Naive thymus-derived CD4-positive, alpha-beta T cell (primary cell): ENCODE measurements at regions of chr21 and their contacts with region 1.

Region 1: DNA sequence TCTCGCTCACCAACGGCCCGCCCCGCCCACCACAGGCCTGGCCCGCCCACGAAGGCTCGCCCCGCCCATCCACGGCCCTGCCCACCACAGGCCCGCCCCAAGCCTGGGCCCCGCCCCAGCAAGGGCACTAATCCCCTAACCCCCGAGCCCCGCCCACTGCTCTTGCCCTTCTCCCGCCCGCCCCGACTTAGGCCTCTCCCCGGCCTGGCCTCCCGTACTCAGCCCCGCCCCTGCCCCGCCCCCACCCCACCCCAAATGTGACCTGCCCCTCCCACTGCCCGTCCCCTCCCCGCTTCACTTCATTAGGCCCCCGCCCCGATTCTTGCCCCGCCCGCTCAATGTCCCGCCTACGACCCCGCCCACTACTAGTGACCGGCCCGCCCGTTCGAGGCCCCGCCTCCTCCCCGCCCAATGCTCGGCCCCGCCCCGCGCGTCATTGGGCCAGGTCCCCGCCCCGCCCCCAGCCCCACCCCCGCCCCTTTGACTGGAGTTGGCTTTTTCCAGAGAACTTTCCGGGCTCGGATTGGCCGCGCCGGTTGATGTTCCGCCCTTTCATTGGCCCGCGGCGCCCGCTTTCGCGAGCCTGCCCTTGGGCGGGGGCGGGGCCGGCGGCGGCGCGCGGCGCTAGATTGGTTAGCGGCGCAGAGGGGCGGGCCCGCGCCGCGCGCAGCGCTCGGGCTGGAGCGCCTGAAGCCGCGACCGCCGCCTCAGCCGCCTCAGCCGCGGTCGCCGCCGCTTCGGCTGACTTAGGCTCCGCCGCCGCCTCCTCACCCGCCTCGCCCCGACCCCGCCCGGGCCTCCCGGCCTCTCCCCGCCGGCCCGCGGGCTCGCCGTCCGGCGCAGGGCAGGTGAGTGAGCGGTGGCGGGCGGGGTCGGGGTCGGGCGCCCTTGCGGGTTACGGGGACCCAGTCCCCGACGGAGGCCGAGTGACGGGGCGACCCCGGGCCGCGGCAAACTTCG is at the start of gene PCBP3:
- DNase-seq: peak; percentile 93 to 99 (median 96)
- ATAC-seq: peak; percentile 87
- H3K4me3 ChIP-seq: no peak within 1 kb of the TSS
- H3K4me3 Mint-ChIP-seq: peak within 1 kb of the TSS; percentile 74 to 86 (median 81)
- H3K27ac ChIP-seq: peak within 1 kb of the TSS; percentile 57
- H3K27ac Mint-ChIP-seq: peak within 1 kb of the TSS in 7 of 9 donors; percentile 28 to 84 (median 74)
- H3K4me1 ChIP-seq: peaks cover 6 to 38% of the 10 kb centered on the region in 2 donors
- H3K4me1 Mint-ChIP-seq: peaks cover 15 to 51% (median 41%) of the 10 kb centered on the region in 7 donors
- H3K27me3 ChIP-seq: peaks cover 0 to 16% of the 10 kb centered on the region in 2 donors
- H3K27me3 Mint-ChIP-seq: peaks cover 0 to 19% (median 6%) of the 10 kb centered on the region in 5 donors
- total RNA-seq, gene PCBP3: 1.2 to 5.2 (median 4.0) TPM

Region 2: DNA sequence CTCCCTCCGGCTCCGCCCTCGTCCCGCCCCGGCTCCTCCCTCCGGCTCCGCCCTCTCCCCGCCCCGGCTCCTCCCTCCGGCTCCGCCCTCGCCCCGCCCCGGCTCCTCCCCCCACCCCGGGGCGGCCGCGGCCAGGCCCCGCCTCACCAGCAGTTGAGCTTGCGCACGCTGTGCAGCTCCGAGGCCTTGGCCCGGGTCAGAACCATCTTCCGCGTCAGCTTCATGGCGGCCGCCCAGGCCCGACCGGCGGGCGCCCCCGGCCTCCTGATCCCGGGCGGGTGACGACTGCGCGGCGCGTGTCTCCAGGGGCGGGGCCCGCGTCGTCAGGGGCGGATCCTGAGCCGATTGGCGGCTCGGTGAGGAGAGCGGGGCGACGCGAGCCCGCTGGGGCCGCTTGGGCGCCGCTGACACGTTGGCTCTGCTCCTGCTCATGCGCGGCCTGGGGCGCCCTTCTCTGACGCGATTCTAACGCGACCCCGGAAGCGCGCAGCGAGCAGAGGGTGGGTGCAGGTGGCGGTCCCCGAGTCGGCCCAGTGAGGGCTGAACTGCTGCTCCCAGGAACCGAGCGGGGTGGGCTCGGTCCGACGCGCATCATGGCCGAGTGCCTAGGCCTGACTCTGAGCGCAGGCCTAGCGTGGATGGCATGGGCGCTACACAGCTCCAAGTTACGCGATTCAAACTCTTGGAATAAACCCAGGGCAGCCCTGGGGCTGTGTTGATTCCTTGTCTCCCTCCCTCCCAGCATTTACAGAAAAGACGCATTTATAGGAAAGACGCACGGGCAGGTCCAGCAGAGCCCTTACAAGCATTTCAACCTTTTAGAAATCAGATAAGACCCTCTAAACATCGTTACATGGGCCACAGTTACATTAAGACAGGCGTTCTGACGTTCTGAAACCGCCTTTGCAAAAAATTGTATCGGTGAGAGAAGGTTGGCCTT is 1304.1 kb before region 1 on chr21 and contains the start of gene CFAP410:
- CTCF ChIA-PET with region 1: no interaction called
- POLR2A ChIA-PET with region 1: no interaction called
- intact Hi-C with region 1: loop called in 1 of 2 experiments (anchors 5 kb)
- DNase-seq: peak; percentile 94 to 97 (median 97)
- ATAC-seq: peak; percentile 92
- H3K4me3 ChIP-seq: peak within 1 kb of the TSS; percentile 97
- H3K4me3 Mint-ChIP-seq: peak within 1 kb of the TSS; percentile 85 to 95 (median 92)
- H3K27ac ChIP-seq: peak within 1 kb of the TSS; percentile 96
- H3K27ac Mint-ChIP-seq: peak within 1 kb of the TSS; percentile 95 to 100 (median 97)
- H3K4me1 ChIP-seq: peaks cover 10 to 15% of the 10 kb centered on the region in 2 donors
- H3K4me1 Mint-ChIP-seq: peaks cover 4 to 33% (median 24%) of the 10 kb centered on the region in 7 donors
- H3K27me3 ChIP-seq: no peaks in the 10 kb centered on the region
- H3K27me3 Mint-ChIP-seq: no peaks in the 10 kb centered on the region
- total RNA-seq, gene CFAP410: 20.8 to 66.7 (median 49.5) TPM

Region 3: DNA sequence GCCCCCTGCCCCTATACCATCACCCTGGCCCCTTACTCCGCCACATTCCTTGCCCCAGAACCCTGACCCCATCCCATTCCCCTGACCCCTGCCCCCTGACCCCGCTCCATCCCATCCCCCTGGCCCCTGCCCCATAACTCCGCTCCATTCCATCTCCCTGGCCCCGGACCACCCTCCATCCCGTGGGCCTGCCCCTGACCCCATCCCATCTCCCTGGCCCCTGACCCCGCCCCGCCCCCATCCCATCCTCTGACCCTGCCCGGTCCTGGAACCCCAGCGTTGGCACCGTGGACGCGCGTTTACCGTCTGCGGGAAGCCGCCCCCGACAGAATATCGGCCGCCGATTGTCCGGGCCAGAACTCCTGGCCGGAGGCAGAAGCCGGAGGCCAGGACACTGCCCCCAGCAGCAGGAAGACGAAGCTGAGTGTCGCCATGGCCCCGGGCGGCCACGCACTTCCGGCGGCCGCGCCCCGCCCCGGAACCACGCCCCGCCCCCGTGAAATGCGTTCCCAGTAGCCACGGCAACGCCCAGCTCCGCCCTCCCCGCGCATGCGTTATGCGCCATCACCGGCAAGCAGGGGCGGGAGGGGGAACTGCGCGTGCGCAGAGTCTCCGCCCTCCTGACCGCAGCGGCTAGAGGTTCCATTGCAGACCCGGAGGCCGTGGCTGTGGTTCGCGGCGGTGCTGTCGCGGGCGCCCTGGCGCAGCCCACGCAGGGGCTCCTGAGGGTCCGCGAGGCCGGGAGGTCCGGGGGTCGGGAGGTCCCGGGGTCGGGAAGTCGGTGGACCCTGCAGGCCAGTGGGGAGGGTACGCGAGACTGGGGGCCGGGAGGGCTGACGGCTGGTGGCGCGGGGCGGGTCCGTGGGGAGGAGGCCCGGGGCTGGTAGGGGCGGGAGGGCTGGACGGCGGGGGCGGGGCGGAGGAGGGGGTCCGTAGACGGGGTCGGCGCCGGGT is 355.6 kb before region 1 on chr21 and contains the start of gene POFUT2:
- CTCF ChIA-PET with region 1: no interaction called
- POLR2A ChIA-PET with region 1: no interaction called
- intact Hi-C with region 1: loop called in 1 of 2 experiments (anchors 1 kb)
- DNase-seq: peak; percentile 95 to 100 (median 98)
- ATAC-seq: peak; percentile 91
- H3K4me3 ChIP-seq: peak within 1 kb of the TSS; percentile 68
- H3K4me3 Mint-ChIP-seq: peak within 1 kb of the TSS; percentile 68 to 88 (median 87)
- H3K27ac ChIP-seq: peak within 1 kb of the TSS; percentile 97
- H3K27ac Mint-ChIP-seq: peak within 1 kb of the TSS; percentile 72 to 93 (median 87)
- H3K4me1 ChIP-seq: peaks cover 7 to 16% of the 10 kb centered on the region in 2 donors
- H3K4me1 Mint-ChIP-seq: peaks cover 11 to 46% (median 30%) of the 10 kb centered on the region in 7 donors
- H3K27me3 ChIP-seq: no peaks in the 10 kb centered on the region
- H3K27me3 Mint-ChIP-seq: peaks cover 0 to 10% (median 0%) of the 10 kb centered on the region in 5 donors
- total RNA-seq, gene POFUT2: 20.1 to 53.3 (median 47.8) TPM

Region 4: DNA sequence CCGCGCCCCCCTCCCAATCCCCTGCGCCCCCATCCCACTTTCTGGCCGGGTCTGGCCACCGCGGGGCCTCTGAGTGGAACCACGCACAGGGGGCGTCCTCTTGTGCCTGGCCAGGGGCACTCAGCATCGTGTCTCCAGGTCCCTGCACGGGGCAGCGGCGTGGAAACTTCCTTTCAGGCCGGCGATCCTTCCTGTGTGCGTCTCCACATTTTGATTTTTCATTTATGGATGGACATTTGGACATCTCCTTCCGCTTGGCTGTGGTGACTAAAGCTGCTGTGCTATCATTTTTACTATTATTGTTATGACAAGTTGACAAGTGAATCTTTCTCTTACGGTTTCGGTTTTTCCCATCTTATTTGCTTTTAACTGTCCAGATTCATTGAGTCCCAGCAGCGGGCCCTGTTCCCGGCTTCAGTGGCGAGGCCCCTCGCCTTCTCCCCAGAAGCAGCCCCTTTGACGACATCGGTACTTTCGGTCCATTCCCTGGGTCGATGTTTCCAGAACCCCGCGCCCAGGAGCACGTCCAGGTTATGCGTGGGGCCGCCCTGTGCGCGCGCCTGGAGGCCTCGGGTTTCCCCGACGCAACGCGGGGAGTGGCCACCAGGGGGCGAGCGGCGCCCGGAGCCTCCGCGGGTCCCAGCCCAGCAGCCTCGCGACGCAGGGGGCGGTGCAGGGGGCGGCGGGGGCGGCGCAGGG is 88.7 kb before region 1 on chr21:
- CTCF ChIA-PET with region 1: no interaction called
- POLR2A ChIA-PET with region 1: no interaction called
- intact Hi-C with region 1: loop called (anchors 1 to 2 kb)
- DNase-seq: peak; percentile 74 to 99 (median 91)
- ATAC-seq: peak; percentile 93
- H3K4me3 ChIP-seq: peak overlapping the region; percentile 89
- H3K4me3 Mint-ChIP-seq: peak overlapping the region; percentile 92 to 99 (median 96)
- H3K27ac ChIP-seq: peak overlapping the region; percentile 67
- H3K27ac Mint-ChIP-seq: peak overlapping the region; percentile 87 to 99 (median 96)
- H3K4me1 ChIP-seq: peaks cover 24 to 26% of the 10 kb centered on the region in 2 donors
- H3K4me1 Mint-ChIP-seq: peaks cover 22 to 39% (median 28%) of the 10 kb centered on the region in 7 donors
- H3K27me3 ChIP-seq: no peaks in the 10 kb centered on the region
- H3K27me3 Mint-ChIP-seq: no peaks in the 10 kb centered on the region

Region 5: DNA sequence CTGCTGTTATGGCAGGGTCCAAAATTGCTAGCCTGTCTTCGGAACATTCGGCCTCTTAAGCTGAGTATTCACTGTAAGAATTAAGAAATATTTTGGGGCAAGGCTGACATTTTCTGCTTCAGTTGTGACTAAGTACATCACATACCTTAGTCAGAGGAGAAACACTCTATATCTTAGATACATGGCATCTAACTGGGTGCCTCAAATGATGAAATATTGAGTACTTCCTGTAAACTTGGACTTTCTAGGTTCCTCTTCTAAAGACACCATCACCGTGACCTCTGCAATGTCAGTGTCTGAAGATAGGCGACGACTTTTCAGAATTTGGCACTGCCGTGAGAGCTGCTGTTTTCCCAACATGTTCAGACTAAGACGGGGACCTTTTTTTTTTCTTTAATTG is 65.9 kb after region 1 on chr21:
- CTCF ChIA-PET with region 1: no interaction called
- POLR2A ChIA-PET with region 1: no interaction called
- intact Hi-C with region 1: loop called in 1 of 2 experiments (anchors 10 kb)
- DNase-seq: no peak
- ATAC-seq: peak; percentile 77
- H3K4me3 ChIP-seq: no peak overlapping the region
- H3K4me3 Mint-ChIP-seq: no peak overlapping the region
- H3K27ac ChIP-seq: no peak overlapping the region
- H3K27ac Mint-ChIP-seq: peak overlapping the region in 2 of 9 donors; percentile 12 to 66
- H3K4me1 ChIP-seq: no peaks in the 10 kb centered on the region
- H3K4me1 Mint-ChIP-seq: peaks cover 0 to 4% (median 0%) of the 10 kb centered on the region in 7 donors
- H3K27me3 ChIP-seq: no peaks in the 10 kb centered on the region
- H3K27me3 Mint-ChIP-seq: no peaks in the 10 kb centered on the region

Region 6: GRCh38 chr21:45973659-45974072 is 330.4 kb after region 1 on chr21:
- CTCF ChIA-PET with region 1: no interaction called
- POLR2A ChIA-PET with region 1: no interaction called
- intact Hi-C with region 1: loop called in 1 of 2 experiments (anchors 10 kb)
- DNase-seq: peak; percentile 59 to 84 (median 77)
- ATAC-seq: peak; percentile 94
- H3K4me3 ChIP-seq: peak overlapping the region; percentile 78
- H3K4me3 Mint-ChIP-seq: peak overlapping the region; percentile 75 to 94 (median 92)
- H3K27ac ChIP-seq: peak overlapping the region; percentile 50
- H3K27ac Mint-ChIP-seq: peak overlapping the region in 8 of 9 donors; percentile 41 to 91 (median 80)
- H3K4me1 ChIP-seq: peaks cover 20 to 22% of the 10 kb centered on the region in 2 donors
- H3K4me1 Mint-ChIP-seq: peaks cover 5 to 28% (median 18%) of the 10 kb centered on the region in 7 donors
- H3K27me3 ChIP-seq: peaks cover 0 to 13% of the 10 kb centered on the region in 2 donors
- H3K27me3 Mint-ChIP-seq: peaks cover 0 to 44% (median 10%) of the 10 kb centered on the region in 5 donors

Region 7: GRCh38 chr21:46323227-46324128 is 680.2 kb after region 1 on chr21 and contains the start of gene C21orf58:
- CTCF ChIA-PET with region 1: no interaction called
- POLR2A ChIA-PET with region 1: no interaction called
- intact Hi-C with region 1: loop called in 1 of 2 experiments (anchors 2 kb)
- DNase-seq: peak; percentile 96 to 99 (median 98)
- ATAC-seq: peak; percentile 90
- H3K4me3 ChIP-seq: peak within 1 kb of the TSS; percentile 98
- H3K4me3 Mint-ChIP-seq: peak within 1 kb of the TSS; percentile 90 to 98 (median 96)
- H3K27ac ChIP-seq: peak within 1 kb of the TSS; percentile 97
- H3K27ac Mint-ChIP-seq: peak within 1 kb of the TSS; percentile 91 to 99 (median 97)
- H3K4me1 ChIP-seq: peaks cover 0 to 16% of the 10 kb centered on the region in 2 donors
- H3K4me1 Mint-ChIP-seq: peaks cover 14 to 44% (median 33%) of the 10 kb centered on the region in 7 donors
- H3K27me3 ChIP-seq: no peaks in the 10 kb centered on the region
- H3K27me3 Mint-ChIP-seq: no peaks in the 10 kb centered on the region
- total RNA-seq, gene C21orf58: 5.0 to 38.4 (median 9.0) TPM